ENCODE measurements at regions of chr6 and their contacts with region 1.

Region 1: GRCh38 chr6:129748212-129748900 is 38.4 kb upstream of the ARHGAP18 start:
- DNase-seq: peak; percentile 70
- H3K4me3 Mint-ChIP-seq: peak overlapping the region; percentile 63
- H3K27ac Mint-ChIP-seq: peak overlapping the region; percentile 91
- H3K4me1 Mint-ChIP-seq: peaks cover 60% of the 10 kb centered on the region
- H3K27me3 Mint-ChIP-seq: no peaks in the 10 kb centered on the region

Region 2: GRCh38 chr6:128520436-128521281 is 1227.7 kb before region 1 on chr6 and contains the start of gene PTPRK:
- CTCF ChIA-PET with region 1: no interaction called
- POLR2A ChIA-PET with region 1: no interaction called
- intact Hi-C with region 1: loop called (anchors 2 kb)
- DNase-seq: peak; percentile 92
- H3K4me3 Mint-ChIP-seq: peak within 1 kb of the TSS; percentile 85
- H3K27ac Mint-ChIP-seq: peak within 1 kb of the TSS; percentile 23
- H3K4me1 Mint-ChIP-seq: peaks cover 9% of the 10 kb centered on the region
- H3K27me3 Mint-ChIP-seq: peaks cover 55% of the 10 kb centered on the region
- total RNA-seq, gene PTPRK: 1.8 to 2.2 TPM

Region 3: GRCh38 chr6:129510950-129511349 is 237.4 kb before region 1 on chr6:
- CTCF ChIA-PET with region 1: no interaction called
- POLR2A ChIA-PET with region 1: no interaction called
- intact Hi-C with region 1: no loop called
- DNase-seq: no peak
- H3K4me3 Mint-ChIP-seq: no peak overlapping the region
- H3K27ac Mint-ChIP-seq: no peak overlapping the region
- H3K4me1 Mint-ChIP-seq: peaks cover 2% of the 10 kb centered on the region
- H3K27me3 Mint-ChIP-seq: no peaks in the 10 kb centered on the region

Region 4: GRCh38 chr6:129598244-129599187 is 149.8 kb before region 1 on chr6:
- CTCF ChIA-PET with region 1: interaction called, 19 read pairs
- POLR2A ChIA-PET with region 1: no interaction called
- intact Hi-C with region 1: no loop called
- DNase-seq: no peak
- H3K4me3 Mint-ChIP-seq: no peak overlapping the region
- H3K27ac Mint-ChIP-seq: no peak overlapping the region
- H3K4me1 Mint-ChIP-seq: no peaks in the 10 kb centered on the region
- H3K27me3 Mint-ChIP-seq: no peaks in the 10 kb centered on the region

Region 5: DNA sequence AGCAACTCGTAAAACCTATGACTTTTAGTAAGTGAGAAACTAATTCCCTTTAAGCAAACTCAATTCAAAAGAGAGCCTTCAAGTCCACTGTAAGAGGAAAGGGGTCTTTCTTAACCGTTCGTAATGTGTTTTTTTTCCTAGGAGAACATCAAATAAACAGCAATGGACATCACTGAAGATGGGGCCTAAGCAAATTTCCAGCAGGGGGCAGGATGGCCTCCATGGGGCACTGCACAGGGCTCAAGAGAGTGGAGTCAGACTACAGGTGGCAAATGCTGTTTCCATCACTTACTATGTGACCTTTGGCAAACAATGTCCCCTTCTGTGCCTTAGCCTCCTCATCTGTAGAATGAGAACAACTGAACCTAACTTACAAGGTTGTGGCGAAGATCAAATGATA is 127.1 kb before region 1 on chr6:
- CTCF ChIA-PET with region 1: interaction called, 4 read pairs
- POLR2A ChIA-PET with region 1: no interaction called
- intact Hi-C with region 1: loop called (anchors 2 kb)
- DNase-seq: peak; percentile 57
- H3K4me3 Mint-ChIP-seq: no peak overlapping the region
- H3K27ac Mint-ChIP-seq: no peak overlapping the region
- H3K4me1 Mint-ChIP-seq: no peaks in the 10 kb centered on the region
- H3K27me3 Mint-ChIP-seq: no peaks in the 10 kb centered on the region

Region 6: GRCh38 chr6:129730477-129731165 is 17.7 kb before region 1 on chr6:
- CTCF ChIA-PET with region 1: interaction called, 18 read pairs
- POLR2A ChIA-PET with region 1: no interaction called
- intact Hi-C with region 1: loop called (anchors 1 kb)
- DNase-seq: peak; percentile 19
- H3K4me3 Mint-ChIP-seq: no peak overlapping the region
- H3K27ac Mint-ChIP-seq: no peak overlapping the region
- H3K4me1 Mint-ChIP-seq: peaks cover 11% of the 10 kb centered on the region
- H3K27me3 Mint-ChIP-seq: no peaks in the 10 kb centered on the region

Region 7: GRCh38 chr6:129835691-129836090 is 87.3 kb after region 1 on chr6:
- CTCF ChIA-PET with region 1: no interaction called
- POLR2A ChIA-PET with region 1: no interaction called
- intact Hi-C with region 1: no loop called
- DNase-seq: no peak
- H3K4me3 Mint-ChIP-seq: no peak overlapping the region
- H3K27ac Mint-ChIP-seq: no peak overlapping the region
- H3K4me1 Mint-ChIP-seq: no peaks in the 10 kb centered on the region
- H3K27me3 Mint-ChIP-seq: peaks cover 5% of the 10 kb centered on the region

Region 8: DNA sequence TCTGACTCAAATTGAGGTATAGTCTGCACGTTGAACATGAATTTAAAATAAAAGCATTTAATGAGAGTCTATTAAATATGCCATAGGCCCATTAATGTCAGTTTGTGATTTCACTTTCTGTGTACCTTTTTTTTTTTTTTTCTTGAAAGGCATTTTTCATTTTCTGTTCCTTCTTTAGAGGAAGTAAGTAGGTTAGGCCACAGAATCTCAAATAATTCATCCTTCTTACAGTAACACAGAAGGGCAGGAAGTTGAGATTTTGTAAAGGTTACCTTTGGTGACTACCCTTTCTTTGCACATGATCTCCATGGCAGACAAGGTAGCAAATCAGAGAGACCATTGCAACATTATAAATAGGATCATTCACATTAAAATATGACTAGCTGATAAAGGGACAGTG is 279.6 kb after region 1 on chr6:
- CTCF ChIA-PET with region 1: no interaction called
- POLR2A ChIA-PET with region 1: no interaction called
- intact Hi-C with region 1: loop called (anchors 2 kb)
- DNase-seq: no peak
- H3K4me3 Mint-ChIP-seq: no peak overlapping the region
- H3K27ac Mint-ChIP-seq: peak overlapping the region; percentile 70
- H3K4me1 Mint-ChIP-seq: peaks cover 53% of the 10 kb centered on the region
- H3K27me3 Mint-ChIP-seq: no peaks in the 10 kb centered on the region

Region 9: GRCh38 chr6:130482645-130483390 is 734.5 kb after region 1 on chr6:
- CTCF ChIA-PET with region 1: no interaction called
- POLR2A ChIA-PET with region 1: no interaction called
- intact Hi-C with region 1: no loop called
- DNase-seq: no peak
- H3K4me3 Mint-ChIP-seq: no peak overlapping the region
- H3K27ac Mint-ChIP-seq: no peak overlapping the region
- H3K4me1 Mint-ChIP-seq: peaks cover 21% of the 10 kb centered on the region
- H3K27me3 Mint-ChIP-seq: no peaks in the 10 kb centered on the region

Measured in activated CD4-positive, alpha-beta memory T cell treated with anti-CD3 and anti-CD28 coated beads for 36 hours (primary cell).